Activated CD8-positive, alpha-beta T cell treated with anti-CD3 and anti-CD28 coated beads, Interleukin-2, amount 10 ng/mL, durations not matched to agents 7 days and 5 days (primary cell): ENCODE measurements at regions of chr6 and their contacts with region 1.

Region 1: DNA sequence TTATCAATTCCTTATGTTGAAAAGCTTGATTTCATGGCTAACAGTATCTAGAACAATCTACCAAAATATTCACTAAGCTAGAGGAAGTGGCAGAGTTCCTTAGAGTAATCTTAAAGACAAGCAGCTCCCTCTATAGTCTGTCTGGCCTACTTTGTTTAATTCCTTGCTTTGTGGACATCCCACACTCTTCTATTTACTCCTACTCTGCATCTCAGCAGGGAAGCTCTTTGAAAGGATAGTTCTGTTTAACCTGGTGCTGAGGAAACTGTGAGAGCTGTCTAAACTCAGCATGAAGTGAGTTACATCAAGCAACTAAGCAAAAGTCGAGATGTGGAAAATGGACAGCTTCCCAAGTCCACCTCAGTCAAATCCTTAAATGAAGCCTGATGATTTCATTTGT is 4.3 kb downstream of the REV3L start:
- DNase-seq: no peak
- ATAC-seq: no peak
- H3K4me3 Mint-ChIP-seq: no peak overlapping the region
- H3K27ac Mint-ChIP-seq: peak overlapping the region; percentile 61
- H3K4me1 Mint-ChIP-seq: peaks cover 33% of the 10 kb centered on the region
- H3K27me3 Mint-ChIP-seq: no peaks in the 10 kb centered on the region

Region 2: DNA sequence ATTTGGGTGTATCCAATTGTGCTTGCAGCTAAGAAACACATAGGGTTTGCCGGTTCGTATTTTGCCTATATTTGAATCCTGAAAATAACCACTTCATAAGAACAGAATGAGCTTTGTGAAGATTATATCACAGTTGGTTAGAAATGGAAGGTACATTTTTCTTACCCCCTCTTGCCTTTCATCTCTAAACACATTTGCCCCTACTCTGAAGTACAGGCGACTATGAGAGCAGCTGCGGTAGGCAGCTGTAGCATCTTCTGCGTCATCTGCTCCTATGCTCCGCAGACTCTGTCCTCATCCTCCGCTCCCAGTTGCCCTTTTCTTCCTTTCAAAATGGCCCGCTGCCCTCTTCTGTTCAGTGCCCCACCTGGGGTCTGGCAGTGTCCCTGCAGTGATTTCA is 51.9 kb after region 1 on chr6:
- CTCF ChIA-PET with region 1: no interaction called
- POLR2A ChIA-PET with region 1: no interaction called
- DNase-seq: no peak
- ATAC-seq: no peak
- H3K4me3 Mint-ChIP-seq: no peak overlapping the region
- H3K27ac Mint-ChIP-seq: no peak overlapping the region
- H3K4me1 Mint-ChIP-seq: peaks cover 30% of the 10 kb centered on the region
- H3K27me3 Mint-ChIP-seq: no peaks in the 10 kb centered on the region

Region 3: GRCh38 chr6:111605100-111605751 is 126.5 kb after region 1 on chr6:
- CTCF ChIA-PET with region 1: interaction called, 18 read pairs
- POLR2A ChIA-PET with region 1: interaction called, 34 read pairs
- DNase-seq: peak; percentile 49
- ATAC-seq: peak; percentile 56
- H3K4me3 Mint-ChIP-seq: peak overlapping the region; percentile 82
- H3K27ac Mint-ChIP-seq: peak overlapping the region; percentile 88
- H3K4me1 Mint-ChIP-seq: peaks cover 47% of the 10 kb centered on the region
- H3K27me3 Mint-ChIP-seq: no peaks in the 10 kb centered on the region

Region 4: DNA sequence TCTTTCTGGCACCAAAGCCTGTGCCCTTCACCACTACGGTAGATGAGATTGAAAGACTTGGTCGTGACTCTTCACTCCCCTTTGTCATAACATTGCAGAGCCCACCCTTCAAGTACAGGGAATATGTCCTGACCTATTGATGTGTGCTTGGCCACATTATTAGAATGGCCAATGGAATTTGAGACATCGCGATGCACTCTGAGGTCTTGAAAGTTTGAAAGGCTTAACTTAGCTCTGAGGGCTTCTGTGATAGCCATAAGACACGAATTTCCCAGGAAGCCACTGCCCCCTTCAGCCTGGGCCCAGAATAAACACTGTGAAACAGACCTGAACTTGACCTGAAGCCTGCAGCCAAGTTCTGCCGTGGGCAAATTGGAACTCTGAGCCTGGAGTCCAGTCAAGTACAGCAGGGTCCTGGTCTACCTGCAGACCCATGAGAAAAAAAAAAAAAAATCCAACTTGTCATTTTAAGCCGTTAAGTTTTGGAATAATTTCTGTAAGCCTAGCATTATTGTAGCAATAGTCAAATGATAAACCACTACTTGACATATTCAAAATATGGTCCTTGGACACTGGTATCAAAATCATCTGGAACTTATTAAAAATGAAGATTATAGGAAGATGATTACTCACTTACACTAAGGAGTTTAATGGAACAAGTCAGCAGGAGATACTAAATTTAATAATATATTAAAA is 163.9 kb after region 1 on chr6:
- CTCF ChIA-PET with region 1: interaction called, 14 read pairs
- POLR2A ChIA-PET with region 1: no interaction called
- DNase-seq: peak; percentile 68
- ATAC-seq: peak; percentile 79
- H3K4me3 Mint-ChIP-seq: no peak overlapping the region
- H3K27ac Mint-ChIP-seq: no peak overlapping the region
- H3K4me1 Mint-ChIP-seq: peaks cover 5% of the 10 kb centered on the region
- H3K27me3 Mint-ChIP-seq: no peaks in the 10 kb centered on the region